Activated T-helper 2 cell treated with anti-CD3 and anti-CD28 coated beads, Interferon-gamma antibody, Interleukin-2, Interleukin-4, amounts not matched to agents 10 μg/mL and 5 μg/mL and 100 μg/mL, durations not matched to agents 14 hours and 24 hours and 36 hours (primary cell): ENCODE measurements at regions of chr1 and their contacts with region 1.

Region 1: GRCh38 chr1:230066466-230067404 is at the start of gene GALNT2:
- DNase-seq: peak; percentile 87
- H3K4me3 Mint-ChIP-seq: peak within 1 kb of the TSS; percentile 89
- H3K27ac Mint-ChIP-seq: peak within 1 kb of the TSS; percentile 85
- H3K4me1 Mint-ChIP-seq: peaks cover 32% of the 10 kb centered on the region
- H3K27me3 Mint-ChIP-seq: peaks cover 6% of the 10 kb centered on the region
- total RNA-seq, gene GALNT2: 58.9 and 59.3 TPM in 2 replicates

Region 2: GRCh38 chr1:230077436-230078221 is 10.9 kb after region 1 on chr1:
- intact Hi-C with region 1: loop called (anchors 1 kb)
- DNase-seq: no peak
- H3K4me3 Mint-ChIP-seq: peak overlapping the region; percentile 0
- H3K27ac Mint-ChIP-seq: peak overlapping the region; percentile 68
- H3K4me1 Mint-ChIP-seq: peaks cover 43% of the 10 kb centered on the region
- H3K27me3 Mint-ChIP-seq: no peaks in the 10 kb centered on the region

Region 3: GRCh38 chr1:230109895-230110667 is 43.3 kb after region 1 on chr1:
- intact Hi-C with region 1: loop called (anchors 1 kb)
- DNase-seq: peak; percentile 56
- H3K4me3 Mint-ChIP-seq: peak overlapping the region; percentile 23
- H3K27ac Mint-ChIP-seq: peak overlapping the region; percentile 88
- H3K4me1 Mint-ChIP-seq: peaks cover 78% of the 10 kb centered on the region
- H3K27me3 Mint-ChIP-seq: no peaks in the 10 kb centered on the region

Region 4: DNA sequence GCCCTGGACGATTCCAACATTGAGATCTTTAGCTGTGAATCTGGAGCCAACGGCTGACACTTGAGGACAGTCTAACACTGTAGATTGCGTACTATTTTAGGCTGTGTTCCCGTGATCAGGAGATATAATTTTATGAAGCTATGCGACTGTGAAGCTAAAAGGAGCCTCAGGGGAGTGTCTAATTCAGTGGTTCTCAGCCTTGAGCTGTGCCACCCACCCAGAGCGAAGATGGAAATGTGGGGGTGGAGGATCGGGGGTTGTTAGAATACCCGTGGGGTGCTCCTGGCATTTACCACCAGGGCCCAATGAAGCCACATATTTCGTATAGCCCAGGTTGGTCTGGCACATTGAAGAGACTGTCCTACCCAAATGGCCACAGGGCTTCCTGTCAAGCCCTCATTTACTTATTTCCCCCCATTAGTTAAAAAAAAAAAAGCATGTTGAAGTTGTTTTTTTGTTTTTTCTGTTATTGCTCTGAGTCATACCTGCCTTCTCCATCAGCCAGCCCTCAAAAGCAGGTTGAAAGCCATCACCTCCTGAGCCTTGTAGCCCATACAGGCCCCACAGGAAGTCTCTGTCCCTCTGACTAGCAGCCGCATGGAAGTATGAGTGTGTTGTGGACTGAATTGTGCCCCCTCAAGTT is 142.0 kb after region 1 on chr1:
- intact Hi-C with region 1: loop called (anchors 2 kb)
- DNase-seq: no peak
- H3K4me3 Mint-ChIP-seq: peak overlapping the region; percentile 76
- H3K27ac Mint-ChIP-seq: peak overlapping the region; percentile 99
- H3K4me1 Mint-ChIP-seq: peaks cover 72% of the 10 kb centered on the region
- H3K27me3 Mint-ChIP-seq: no peaks in the 10 kb centered on the region

Region 5: GRCh38 chr1:230978491-230979388 is 912.0 kb after region 1 on chr1 and contains the starts of genes ARV1 and TTC13:
- intact Hi-C with region 1: loop called (anchors 5 kb)
- DNase-seq: peak; percentile 96
- H3K4me3 Mint-ChIP-seq: peak within 1 kb of the TSS; percentile 98
- H3K27ac Mint-ChIP-seq: peak within 1 kb of the TSS; percentile 93
- H3K4me1 Mint-ChIP-seq: peaks cover 41% of the 10 kb centered on the region
- H3K27me3 Mint-ChIP-seq: no peaks in the 10 kb centered on the region
- total RNA-seq, gene ARV1: 10.7 and 11.3 TPM in 2 replicates
- total RNA-seq, gene TTC13: 17.5 and 17.7 TPM in 2 replicates